BJ (cell line): ENCODE measurements at regions of chr19 and their contacts with region 1.

Region 1: DNA sequence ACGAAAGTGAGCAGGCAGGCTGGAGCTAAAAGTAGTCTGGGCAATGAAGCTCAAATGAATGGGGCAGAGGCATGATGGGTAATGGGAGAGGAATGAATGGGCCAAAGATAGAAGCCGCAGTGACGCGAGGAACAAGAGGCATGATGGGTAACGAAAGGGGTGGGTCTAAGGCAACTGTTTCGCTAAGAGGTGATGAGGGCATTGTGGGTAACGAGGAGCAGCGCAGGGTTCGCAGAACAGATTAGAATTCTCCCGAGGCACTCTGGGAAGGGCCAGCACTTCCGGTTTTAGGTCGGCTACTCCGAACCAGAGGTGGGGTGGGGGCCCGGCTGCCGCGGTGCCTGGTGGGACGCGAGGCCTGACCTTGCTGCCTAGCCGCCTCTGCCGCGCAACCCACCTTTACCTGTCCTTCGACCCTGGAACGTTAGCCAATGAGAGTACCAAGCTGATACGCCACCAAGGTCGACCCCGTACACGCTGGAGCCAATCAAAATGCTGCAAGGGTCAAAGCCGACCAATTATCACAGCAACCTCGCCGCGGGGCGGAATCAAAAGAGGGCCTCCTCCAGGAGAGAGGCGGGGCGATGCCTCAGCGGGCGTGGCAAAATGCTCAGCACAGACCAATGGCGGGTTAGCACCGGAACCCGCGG is 563 bp upstream of the TOMM40 start:
- DNase-seq: peak; percentile 99
- H3K4me3 ChIP-seq: peak overlapping the region; percentile 57
- H3K27me3 ChIP-seq: no peaks in the 10 kb centered on the region
- CTCF ChIP-seq: no peak

Region 2: GRCh38 chr19:44845612-44846454 is 44.7 kb before region 1 on chr19 and contains the start of gene NECTIN2:
- CTCF ChIA-PET with region 1: no interaction called
- POLR2A ChIA-PET with region 1: no interaction called
- DNase-seq: peak; percentile 81
- H3K4me3 ChIP-seq: peak within 1 kb of the TSS; percentile 69
- H3K27me3 ChIP-seq: no peaks in the 10 kb centered on the region
- CTCF ChIP-seq: peak; percentile 84
- polyA plus RNA-seq, gene NECTIN2: 80.6 and 107 TPM in 2 replicates

Region 3: GRCh38 chr19:44903602-44904425 is 13.3 kb after region 1 on chr19:
- CTCF ChIA-PET with region 1: interaction called, 31 read pairs
- POLR2A ChIA-PET with region 1: no interaction called
- DNase-seq: no peak
- H3K4me3 ChIP-seq: no peak overlapping the region
- H3K27me3 ChIP-seq: peaks cover 3% of the 10 kb centered on the region
- CTCF ChIP-seq: peak; percentile 99

Region 4: DNA sequence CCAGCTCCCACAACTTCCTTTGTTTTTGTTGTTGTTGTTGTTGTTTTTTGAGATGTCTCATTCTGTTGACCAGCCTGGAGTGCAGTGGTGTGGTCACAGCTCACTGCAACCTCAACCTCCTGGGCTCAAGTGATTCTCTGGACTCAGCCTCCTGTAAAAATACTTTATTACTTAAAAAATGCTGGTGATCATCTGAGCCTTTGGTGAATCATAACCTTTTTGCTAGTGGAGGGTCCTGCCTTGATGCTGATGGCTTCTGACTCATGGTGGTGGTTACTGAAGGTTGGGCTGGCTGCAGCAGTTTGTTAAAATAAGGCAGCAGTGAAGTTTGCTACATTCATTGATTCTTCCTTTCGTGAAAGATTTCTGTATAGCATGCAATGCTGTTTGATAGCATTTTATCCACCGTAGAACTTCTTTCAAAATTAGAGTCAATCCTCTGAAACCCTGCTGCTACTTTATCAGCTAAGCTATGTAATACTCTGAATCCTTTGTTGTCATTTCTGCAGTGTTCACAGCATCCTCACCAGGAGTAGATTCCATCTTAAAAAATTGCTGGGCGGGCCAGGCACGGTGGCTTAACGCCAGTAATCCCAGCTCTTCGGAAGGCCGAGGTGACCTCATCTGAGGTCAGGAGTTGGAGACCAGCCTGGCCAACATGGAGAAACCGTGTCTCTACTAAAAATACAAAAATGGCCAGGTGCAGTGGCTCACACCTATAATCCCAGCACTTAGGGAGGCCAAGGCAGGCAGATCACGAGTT is 1988.3 kb after region 1 on chr19:
- CTCF ChIA-PET with region 1: no interaction called
- POLR2A ChIA-PET with region 1: interaction called, 11 read pairs
- DNase-seq: peak; percentile 68
- H3K4me3 ChIP-seq: no peak overlapping the region
- H3K27me3 ChIP-seq: no peaks in the 10 kb centered on the region
- CTCF ChIP-seq: no peak